Mammary epithelial cell (primary cell): ENCODE measurements at regions of chr3 and their contacts with region 1.

Region 1: GRCh38 chr3:44106756-44107155 is 134.9 kb upstream of the TOPAZ1 start:
- DNase-seq: no peak
- H3K4me3 ChIP-seq: no peak overlapping the region
- H3K27ac ChIP-seq: no peak overlapping the region
- H3K4me1 ChIP-seq: peaks cover 34% of the 10 kb centered on the region
- H3K27me3 ChIP-seq: no peaks in the 10 kb centered on the region
- CTCF ChIP-seq: no peak

Region 2: GRCh38 chr3:44128057-44128775 is 21.5 kb after region 1 on chr3:
- CTCF ChIA-PET with region 1: no interaction called
- dilution Hi-C with region 1: no loop called
- in situ Hi-C with region 1: no loop called
- intact Hi-C with region 1: loop called (anchors 1 kb)
- DNase-seq: no peak
- H3K4me3 ChIP-seq: no peak overlapping the region
- H3K27ac ChIP-seq: no peak overlapping the region
- H3K4me1 ChIP-seq: peaks cover 22% of the 10 kb centered on the region
- H3K27me3 ChIP-seq: no peaks in the 10 kb centered on the region
- CTCF ChIP-seq: no peak

Region 3: GRCh38 chr3:44175070-44175469 is 68.3 kb after region 1 on chr3:
- CTCF ChIA-PET with region 1: no interaction called
- dilution Hi-C with region 1: no loop called
- in situ Hi-C with region 1: no loop called
- intact Hi-C with region 1: no loop called
- DNase-seq: no peak
- H3K4me3 ChIP-seq: no peak overlapping the region
- H3K27ac ChIP-seq: no peak overlapping the region
- H3K4me1 ChIP-seq: peaks cover 5% of the 10 kb centered on the region
- H3K27me3 ChIP-seq: no peaks in the 10 kb centered on the region
- CTCF ChIP-seq: no peak